H1 (cell line): ENCODE measurements at regions of chr5 and their contacts with region 1.

Region 1: DNA sequence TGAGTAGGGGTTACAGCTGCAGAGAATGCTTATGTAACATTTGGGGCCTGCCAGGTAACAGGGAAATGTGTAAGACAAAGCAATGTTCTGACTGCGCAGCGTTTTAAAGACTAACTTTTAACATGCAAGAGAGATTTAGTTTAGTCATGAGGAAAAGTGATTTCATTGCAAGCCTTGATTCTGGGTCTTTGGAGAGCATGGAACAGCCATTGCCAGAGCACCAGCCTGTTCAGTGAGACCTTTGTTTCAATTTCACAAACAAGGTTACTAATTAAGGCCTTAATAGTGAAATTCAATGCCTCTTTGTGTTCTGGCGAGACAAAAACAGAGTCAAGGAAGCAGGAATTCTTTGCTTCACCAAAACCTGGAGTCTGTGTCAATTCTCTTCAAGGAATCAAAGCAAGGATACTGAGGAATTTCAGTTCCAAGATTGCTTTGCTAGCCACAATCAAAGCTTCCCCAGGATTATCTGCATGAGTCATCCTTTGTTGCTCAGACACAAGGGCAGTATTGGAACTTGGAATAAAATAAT is 14.4 kb downstream of the CKMT2 start:
- DNase-seq: no peak
- H3K4me3 ChIP-seq: no peak overlapping the region
- H3K27ac ChIP-seq: no peak overlapping the region
- H3K4me1 ChIP-seq: peaks cover 0 to 5% (median 2%) of the 10 kb centered on the region in 4 experiments; a peak in 3 of 7 replicates
- H3K27me3 ChIP-seq: no peaks in the 10 kb centered on the region
- CTCF ChIP-seq: no peak
- EP300 ChIP-seq: no peak
- POLR2A ChIP-seq: no peak
- RAD21 ChIP-seq: no peak

Region 2: DNA sequence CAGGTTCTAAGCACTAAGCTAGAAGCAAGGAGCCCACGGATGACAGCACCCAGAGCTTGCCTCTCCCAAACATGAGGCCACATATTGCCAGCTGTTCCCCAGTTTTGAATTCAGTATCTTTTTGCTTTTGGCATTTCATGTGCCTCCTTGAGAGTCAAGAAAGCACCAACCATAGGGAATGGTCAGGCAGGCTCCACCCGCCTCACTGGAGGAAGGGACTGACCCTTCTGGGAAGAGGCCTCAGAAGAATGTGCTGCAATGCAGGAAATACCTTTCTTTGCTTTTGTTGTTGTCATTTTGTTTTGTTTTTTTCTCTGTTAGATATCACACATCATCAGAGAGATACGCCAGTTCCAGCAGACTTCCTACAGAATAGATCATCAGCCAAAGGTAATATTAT is 28.1 kb before region 1 on chr5:
- CTCF ChIA-PET with region 1: no interaction called
- POLR2A ChIA-PET with region 1: no interaction called
- DNase-seq: no peak
- H3K4me3 ChIP-seq: no peak overlapping the region
- H3K27ac ChIP-seq: no peak overlapping the region
- H3K4me1 ChIP-seq: no peaks in the 10 kb centered on the region
- H3K27me3 ChIP-seq: no peaks in the 10 kb centered on the region
- CTCF ChIP-seq: no peak
- EP300 ChIP-seq: no peak
- POLR2A ChIP-seq: no peak
- RAD21 ChIP-seq: no peak

Region 3: DNA sequence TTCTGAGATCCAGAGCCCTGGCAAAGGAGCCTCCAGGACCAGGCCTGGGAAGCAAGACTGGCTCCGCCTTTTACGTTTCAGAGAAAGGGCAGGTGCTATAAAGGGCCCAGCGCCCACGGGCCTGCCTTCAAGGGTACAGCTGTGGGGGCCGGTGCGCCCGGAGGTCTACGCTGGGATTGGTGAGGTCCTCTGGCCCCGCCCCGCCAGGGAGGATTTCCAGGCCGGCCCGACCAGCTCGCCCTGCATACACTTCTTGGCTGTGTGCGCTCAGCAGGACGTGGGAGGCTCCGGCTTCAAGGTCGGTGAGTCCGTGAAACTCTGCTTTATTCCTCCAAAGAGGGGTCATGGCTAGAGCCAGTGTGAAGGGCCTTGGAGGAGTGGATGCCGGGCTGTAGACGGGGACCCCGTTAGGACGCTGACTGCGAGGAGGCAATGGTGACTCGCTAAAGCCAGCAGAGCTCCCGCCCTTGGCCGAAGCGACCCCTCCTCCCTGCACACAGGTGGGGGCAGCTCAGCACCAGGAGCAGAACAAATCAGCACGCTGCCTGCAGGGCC is 14.3 kb before region 1 on chr5 and contains the start of gene CKMT2:
- CTCF ChIA-PET with region 1: interaction called, 3 read pairs
- POLR2A ChIA-PET with region 1: interaction called, 24 read pairs
- DNase-seq: peak; percentile 61 to 93
- H3K4me3 ChIP-seq: peak within 1 kb of the TSS; percentile 50 to 61 (median 57)
- H3K27ac ChIP-seq: peak within 1 kb of the TSS; percentile 42; the same call in 1 of the 2 replicates
- H3K4me1 ChIP-seq: peaks cover 3 to 15% (median 5%) of the 10 kb centered on the region in 4 experiments
- H3K27me3 ChIP-seq: no peaks in the 10 kb centered on the region
- CTCF ChIP-seq: no peak
- EP300 ChIP-seq: no peak
- POLR2A ChIP-seq: peak; percentile 50 to 90
- RAD21 ChIP-seq: no peak; a peak in 1 of 4 replicates
- total RNA-seq, gene CKMT2: 1.2 and 2.4 TPM in 2 replicates